ENCODE measurements at regions of chr5 and their contacts with region 1.

Region 1: GRCh38 chr5:43484106-43484849 is 613 bp upstream of the TMEM267 start:
- DNase-seq: peak; percentile 70 to 91 (median 83)
- H3K4me3 ChIP-seq: peak overlapping the region; percentile 61
- H3K4me3 Mint-ChIP-seq: peak overlapping the region; percentile 94 to 99 (median 98)
- H3K27ac ChIP-seq: peak overlapping the region; percentile 96
- H3K27ac Mint-ChIP-seq: peak overlapping the region; percentile 99 to 100 (median 100)
- H3K4me1 ChIP-seq: peaks cover 32% of the 10 kb centered on the region
- H3K4me1 Mint-ChIP-seq: peaks cover 31 to 53% (median 50%) of the 10 kb centered on the region in 3 donors
- H3K27me3 ChIP-seq: no peaks in the 10 kb centered on the region
- H3K27me3 Mint-ChIP-seq: no peaks in the 10 kb centered on the region

Region 2: DNA sequence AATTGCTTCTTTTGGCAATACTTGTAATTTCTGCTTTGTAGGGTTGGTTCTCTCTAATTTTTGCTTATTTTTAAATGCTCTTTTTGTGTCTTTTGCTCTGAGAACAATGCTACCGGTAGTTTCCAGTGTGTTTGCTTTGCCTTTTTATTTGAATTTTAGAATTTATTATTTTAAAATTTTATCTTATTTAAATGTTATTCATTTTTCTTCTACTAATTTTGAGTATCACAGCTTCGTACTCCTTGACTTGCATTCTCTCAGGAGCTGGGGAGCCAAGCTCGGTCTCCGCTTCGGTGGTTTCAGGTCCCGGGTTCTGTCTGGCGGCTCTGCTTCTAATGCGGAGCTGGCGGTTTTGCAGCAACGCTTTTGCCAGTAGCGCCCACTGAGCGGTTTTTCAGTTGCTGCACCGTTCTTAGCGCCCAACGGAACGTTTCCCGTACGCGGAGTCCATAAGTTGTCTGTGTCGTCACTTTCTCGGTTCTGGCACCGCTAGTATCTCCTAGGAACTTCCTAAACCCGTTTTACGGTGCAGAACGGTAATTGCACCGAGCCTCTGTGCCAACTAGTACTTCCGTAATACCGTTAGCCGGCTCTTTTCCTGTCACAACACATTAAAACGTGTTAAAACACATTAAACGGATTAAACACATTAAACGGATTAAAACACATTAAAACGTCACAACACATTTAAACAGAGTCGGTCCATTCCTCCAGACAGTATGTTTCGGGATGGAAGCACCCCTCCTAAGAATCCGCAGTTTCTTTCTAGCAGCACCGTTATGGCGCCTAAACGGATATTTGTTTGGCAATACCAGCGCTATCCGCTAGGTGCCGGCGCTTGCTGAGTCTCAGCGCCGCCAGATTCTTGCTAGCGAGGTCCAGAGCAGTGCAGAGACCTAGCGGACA is 489.8 kb before region 1 on chr5:
- CTCF ChIA-PET with region 1: interaction called, 8 read pairs
- POLR2A ChIA-PET with region 1: interaction called, 26 read pairs
- DNase-seq: peak; percentile 74 to 91 (median 84)
- H3K4me3 ChIP-seq: peak overlapping the region; percentile 97
- H3K4me3 Mint-ChIP-seq: peak overlapping the region; percentile 94 to 100 (median 99)
- H3K27ac ChIP-seq: peak overlapping the region; percentile 97
- H3K27ac Mint-ChIP-seq: peak overlapping the region; percentile 97 to 100 (median 100)
- H3K4me1 ChIP-seq: peaks cover 29% of the 10 kb centered on the region
- H3K4me1 Mint-ChIP-seq: peaks cover 31 to 35% (median 35%) of the 10 kb centered on the region in 3 donors
- H3K27me3 ChIP-seq: no peaks in the 10 kb centered on the region
- H3K27me3 Mint-ChIP-seq: peaks cover 0 to 13% of the 10 kb centered on the region in 2 donors

Region 3: DNA sequence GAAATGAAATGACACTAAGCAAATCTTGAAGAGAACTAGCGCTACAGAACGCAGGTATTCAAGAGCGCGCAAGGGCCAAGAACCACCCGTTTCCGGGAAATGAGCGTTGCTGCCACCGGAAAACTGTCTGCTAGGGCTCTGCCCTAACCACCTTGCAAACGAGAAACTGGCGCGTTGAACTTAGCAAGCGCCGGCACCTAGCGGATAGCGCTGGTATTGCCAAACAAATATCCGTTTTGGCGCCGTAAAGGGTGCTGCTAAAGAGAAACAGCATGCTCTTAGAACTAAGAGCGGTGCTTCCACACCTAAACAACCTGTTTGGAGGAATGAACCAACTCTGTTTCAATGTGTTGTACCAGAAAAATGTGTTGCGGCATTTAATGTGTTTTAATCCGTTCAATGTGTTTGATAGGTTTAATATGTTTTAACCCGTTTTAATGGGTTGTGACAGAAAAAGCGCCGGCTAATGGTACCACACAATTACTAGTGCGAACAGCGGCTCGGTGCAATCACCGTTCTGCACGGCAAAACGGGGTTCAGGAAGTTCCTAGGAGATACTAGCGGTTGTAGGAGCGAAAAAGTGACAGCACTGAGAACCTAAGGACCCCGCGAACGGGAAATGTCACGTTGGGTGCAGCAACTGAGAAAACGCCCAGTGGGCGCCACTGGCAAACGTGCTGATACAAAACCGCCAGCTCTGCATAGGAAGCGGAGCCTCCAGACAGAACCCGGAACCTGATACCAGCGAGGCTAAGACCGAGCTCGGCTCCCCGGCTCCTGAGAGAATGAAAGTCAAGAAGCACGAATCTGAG is 443.8 kb before region 1 on chr5 and contains the start of gene ANXA2R:
- CTCF ChIA-PET with region 1: interaction called, 15 read pairs
- POLR2A ChIA-PET with region 1: interaction called, 12 read pairs
- DNase-seq: peak; percentile 87 to 98 (median 95)
- H3K4me3 ChIP-seq: peak within 1 kb of the TSS; percentile 98
- H3K4me3 Mint-ChIP-seq: peak within 1 kb of the TSS; percentile 91 to 100 (median 99)
- H3K27ac ChIP-seq: peak within 1 kb of the TSS; percentile 88
- H3K27ac Mint-ChIP-seq: peak within 1 kb of the TSS; percentile 97 to 100 (median 99)
- H3K4me1 ChIP-seq: peaks cover 36% of the 10 kb centered on the region
- H3K4me1 Mint-ChIP-seq: peaks cover 45 to 62% (median 51%) of the 10 kb centered on the region in 3 donors
- H3K27me3 ChIP-seq: no peaks in the 10 kb centered on the region
- H3K27me3 Mint-ChIP-seq: peaks cover 0 to 13% of the 10 kb centered on the region in 2 donors
- total RNA-seq, gene ANXA2R: 6.0 to 6.8 TPM

Region 4: DNA sequence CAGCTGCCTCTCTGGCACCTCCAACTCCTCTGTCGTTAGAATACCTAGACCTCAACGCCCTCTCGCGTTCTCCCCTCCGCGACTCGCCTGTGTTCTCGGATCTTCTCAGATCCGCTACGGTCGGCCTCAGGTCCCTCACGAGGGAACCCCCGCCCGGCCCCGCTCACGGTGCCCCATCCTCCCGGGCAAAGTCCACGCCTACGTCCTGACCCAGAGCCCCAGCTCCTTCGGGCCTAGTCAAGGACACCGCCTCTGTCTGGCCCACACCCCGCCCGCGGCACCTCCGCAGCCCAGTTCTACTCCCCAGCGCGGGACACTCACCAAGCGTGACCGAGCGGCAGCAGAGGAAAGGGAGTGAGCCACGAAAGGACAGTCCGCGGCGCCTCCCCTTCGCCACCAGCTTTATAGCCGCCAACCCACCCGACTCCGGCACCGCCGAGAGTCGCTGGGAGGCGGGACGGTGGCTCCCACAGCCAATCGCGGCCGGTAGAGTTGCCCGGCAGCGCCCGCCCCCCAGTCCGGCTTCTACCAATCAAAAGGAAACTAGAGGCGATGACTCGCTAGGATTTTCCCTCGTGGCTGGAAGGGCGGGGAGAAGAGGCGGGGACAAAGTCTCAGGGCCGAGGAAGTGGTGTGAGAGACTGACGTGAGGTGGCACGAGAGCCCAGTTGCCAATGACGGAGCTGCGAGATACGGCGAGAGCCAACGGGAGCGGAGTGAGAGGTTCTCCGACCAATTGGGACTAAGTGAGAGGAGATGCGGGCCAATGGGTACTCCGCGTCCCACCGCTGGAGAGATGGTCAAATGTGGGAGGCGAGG is 171.0 kb before region 1 on chr5 and contains the start of gene HMGCS1:
- CTCF ChIA-PET with region 1: interaction called, 33 read pairs
- POLR2A ChIA-PET with region 1: interaction called, 42 read pairs
- DNase-seq: peak; percentile 97 to 99 (median 99)
- H3K4me3 ChIP-seq: peak within 1 kb of the TSS; percentile 77
- H3K4me3 Mint-ChIP-seq: peak within 1 kb of the TSS; percentile 88 to 97 (median 95)
- H3K27ac ChIP-seq: peak within 1 kb of the TSS; percentile 97
- H3K27ac Mint-ChIP-seq: peak within 1 kb of the TSS; percentile 82 to 96 (median 95)
- H3K4me1 ChIP-seq: peaks cover 36% of the 10 kb centered on the region
- H3K4me1 Mint-ChIP-seq: peaks cover 25 to 45% (median 42%) of the 10 kb centered on the region in 3 donors
- H3K27me3 ChIP-seq: no peaks in the 10 kb centered on the region
- H3K27me3 Mint-ChIP-seq: peaks cover 3 to 8% of the 10 kb centered on the region in 2 donors
- total RNA-seq, gene HMGCS1: 70.3 to 75.1 TPM

Region 5: DNA sequence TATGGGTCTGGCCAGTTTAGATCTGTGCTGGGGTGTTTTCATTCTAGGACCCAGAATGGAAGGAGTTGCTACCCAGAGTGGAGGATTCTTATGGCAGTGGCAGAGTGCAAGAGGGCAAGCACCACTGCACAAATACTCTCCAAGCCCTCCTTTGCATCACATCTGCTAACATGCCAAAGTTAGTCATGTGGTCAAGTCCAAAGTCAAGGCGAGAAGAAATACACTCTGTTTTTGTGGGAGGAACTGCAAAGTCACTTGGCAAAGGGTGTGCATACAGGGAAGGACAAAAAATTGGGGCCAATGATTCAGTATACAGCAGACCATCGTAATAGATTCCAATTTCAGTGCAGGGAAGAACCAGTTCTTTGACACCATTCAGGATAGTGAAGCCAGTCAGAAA is 127.2 kb before region 1 on chr5:
- CTCF ChIA-PET with region 1: no interaction called
- POLR2A ChIA-PET with region 1: no interaction called
- DNase-seq: no peak
- H3K4me3 ChIP-seq: no peak overlapping the region
- H3K4me3 Mint-ChIP-seq: no peak overlapping the region
- H3K27ac ChIP-seq: no peak overlapping the region
- H3K27ac Mint-ChIP-seq: no peak overlapping the region
- H3K4me1 ChIP-seq: no peaks in the 10 kb centered on the region
- H3K4me1 Mint-ChIP-seq: no peaks in the 10 kb centered on the region
- H3K27me3 ChIP-seq: no peaks in the 10 kb centered on the region
- H3K27me3 Mint-ChIP-seq: peaks cover 0 to 8% of the 10 kb centered on the region in 2 donors

Region 6: GRCh38 chr5:43514816-43515677 is 30.8 kb after region 1 on chr5 and contains the start of gene C5orf34:
- CTCF ChIA-PET with region 1: interaction called, 22 read pairs
- POLR2A ChIA-PET with region 1: interaction called, 33 read pairs
- DNase-seq: peak; percentile 89 to 94 (median 91)
- H3K4me3 ChIP-seq: peak within 1 kb of the TSS; percentile 86
- H3K4me3 Mint-ChIP-seq: peak within 1 kb of the TSS; percentile 91 to 98 (median 94)
- H3K27ac ChIP-seq: peak within 1 kb of the TSS; percentile 83
- H3K27ac Mint-ChIP-seq: peak within 1 kb of the TSS; percentile 83 to 99 (median 94)
- H3K4me1 ChIP-seq: peaks cover 9% of the 10 kb centered on the region
- H3K4me1 Mint-ChIP-seq: peaks cover 24 to 36% (median 30%) of the 10 kb centered on the region in 3 donors
- H3K27me3 ChIP-seq: no peaks in the 10 kb centered on the region
- H3K27me3 Mint-ChIP-seq: peaks cover 0 to 1% of the 10 kb centered on the region in 2 donors
- total RNA-seq, gene C5orf34: 7.4 to 9.0 TPM

Measured in CD8-positive, alpha-beta memory T cell (primary cell).